Activated CD4-positive, alpha-beta T cell treated with anti-CD3 and anti-CD28 coated beads, Interleukin-2, amount 10 ng/mL, durations not matched to agents 24 days and 14 days (primary cell): ENCODE measurements at regions of chrX and their contacts with region 1.

Region 1: DNA sequence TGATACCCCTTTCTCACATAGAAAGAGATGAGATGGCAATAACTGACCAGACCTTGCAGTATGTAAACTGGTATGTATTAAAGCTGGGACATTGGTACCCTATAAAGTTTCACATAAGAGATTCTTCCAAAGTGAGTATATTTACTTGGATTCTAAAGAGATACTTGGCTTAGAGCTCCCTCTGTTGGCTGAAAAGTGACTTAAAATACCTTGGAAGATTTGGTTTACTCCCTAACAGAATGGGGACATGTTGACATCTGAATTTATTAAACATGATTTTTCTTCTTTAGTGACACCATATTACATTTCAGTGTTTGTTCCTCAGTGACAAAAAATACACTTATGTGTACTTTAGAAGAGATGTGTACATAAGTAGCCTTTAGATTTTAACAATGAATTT is 47.9 kb upstream of the RGN start:
- DNase-seq: peak; percentile 67
- H3K4me3 Mint-ChIP-seq: no peak overlapping the region
- H3K27ac Mint-ChIP-seq: no peak overlapping the region
- H3K4me1 Mint-ChIP-seq: no peaks in the 10 kb centered on the region
- H3K27me3 Mint-ChIP-seq: no peaks in the 10 kb centered on the region

Region 2: GRCh38 chrX:46758906-46759644 is 271.3 kb before region 1 on chrX and contains the start of gene SLC9A7:
- intact Hi-C with region 1: loop called (anchors 2 kb)
- DNase-seq: peak; percentile 94
- H3K4me3 Mint-ChIP-seq: peak within 1 kb of the TSS; percentile 99
- H3K27ac Mint-ChIP-seq: peak within 1 kb of the TSS; percentile 96
- H3K4me1 Mint-ChIP-seq: peaks cover 24% of the 10 kb centered on the region
- H3K27me3 Mint-ChIP-seq: peaks cover 4% of the 10 kb centered on the region
- total RNA-seq, gene SLC9A7: 37.7 and 43.8 TPM in 2 replicates

Region 3: DNA sequence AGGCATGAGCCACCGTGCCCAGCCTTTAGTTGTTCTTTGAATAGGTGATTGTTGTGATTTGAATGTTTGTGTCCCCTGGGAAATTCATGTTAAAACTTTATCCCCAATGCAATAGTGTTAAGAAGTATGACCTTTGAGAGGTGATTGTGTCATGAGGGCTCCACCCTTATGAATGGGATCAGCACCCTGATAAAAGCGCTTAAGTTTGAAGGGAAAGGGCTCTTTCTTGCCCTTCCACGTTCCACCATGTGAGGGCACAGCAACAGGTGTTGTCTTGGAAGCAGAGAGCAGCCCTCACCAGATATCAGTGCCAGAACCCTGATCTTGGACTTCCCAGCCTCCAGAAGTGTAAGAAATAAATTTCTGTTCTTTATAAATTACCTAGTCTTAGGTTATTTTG is 227.2 kb before region 1 on chrX:
- intact Hi-C with region 1: loop called (anchors 10 kb)
- DNase-seq: no peak
- H3K4me3 Mint-ChIP-seq: no peak overlapping the region
- H3K27ac Mint-ChIP-seq: no peak overlapping the region
- H3K4me1 Mint-ChIP-seq: no peaks in the 10 kb centered on the region
- H3K27me3 Mint-ChIP-seq: peaks cover 13% of the 10 kb centered on the region

Region 4: GRCh38 chrX:46903458-46904242 is 126.7 kb before region 1 on chrX:
- intact Hi-C with region 1: loop called (anchors 5 kb)
- DNase-seq: peak; percentile 82
- H3K4me3 Mint-ChIP-seq: peak overlapping the region; percentile 69
- H3K27ac Mint-ChIP-seq: no peak overlapping the region
- H3K4me1 Mint-ChIP-seq: no peaks in the 10 kb centered on the region
- H3K27me3 Mint-ChIP-seq: peaks cover 22% of the 10 kb centered on the region